ENCODE measurements at regions of chr6 and their contacts with region 1.

Region 1: GRCh38 chr6:21846541-21847451 is 253.2 kb downstream of the SOX4 start:
- DNase-seq: peak; percentile 96
- H3K4me3 ChIP-seq: peak overlapping the region in 1 of 3 experiments; percentile 27
- H3K27ac ChIP-seq: peak overlapping the region; percentile 98
- H3K4me1 ChIP-seq: peaks cover 54% of the 10 kb centered on the region
- H3K27me3 ChIP-seq: no peaks in the 10 kb centered on the region
- CTCF ChIP-seq: no peak
- POLR2A ChIP-seq: peak; percentile 30

Region 2: GRCh38 chr6:21664314-21665109 is 182.3 kb before region 1 on chr6:
- CTCF ChIA-PET with region 1: no interaction called
- POLR2A ChIA-PET with region 1: no interaction called
- dilution Hi-C with region 1: no loop called
- intact Hi-C with region 1: loop called (anchors 1 kb)
- DNase-seq: peak; percentile 61
- H3K4me3 ChIP-seq: peak overlapping the region; percentile 47 to 59 (median 55)
- H3K27ac ChIP-seq: peak overlapping the region; percentile 22
- H3K4me1 ChIP-seq: peaks cover 24% of the 10 kb centered on the region
- H3K27me3 ChIP-seq: no peaks in the 10 kb centered on the region
- CTCF ChIP-seq: no peak
- POLR2A ChIP-seq: no peak

Region 3: GRCh38 chr6:21694168-21694567 is 152.6 kb before region 1 on chr6:
- CTCF ChIA-PET with region 1: no interaction called
- POLR2A ChIA-PET with region 1: no interaction called
- dilution Hi-C with region 1: no loop called
- intact Hi-C with region 1: no loop called
- DNase-seq: no peak
- H3K4me3 ChIP-seq: no peak overlapping the region
- H3K27ac ChIP-seq: no peak overlapping the region
- H3K4me1 ChIP-seq: peaks cover 6% of the 10 kb centered on the region
- H3K27me3 ChIP-seq: no peaks in the 10 kb centered on the region
- CTCF ChIP-seq: no peak
- POLR2A ChIP-seq: no peak

Region 4: GRCh38 chr6:21885532-21886114 is 38.8 kb after region 1 on chr6:
- CTCF ChIA-PET with region 1: interaction called, 6 read pairs
- POLR2A ChIA-PET with region 1: no interaction called
- dilution Hi-C with region 1: no loop called
- intact Hi-C with region 1: loop called (anchors 1 kb)
- DNase-seq: peak; percentile 93
- H3K4me3 ChIP-seq: no peak overlapping the region
- H3K27ac ChIP-seq: peak overlapping the region; percentile 85
- H3K4me1 ChIP-seq: peaks cover 37% of the 10 kb centered on the region
- H3K27me3 ChIP-seq: no peaks in the 10 kb centered on the region
- CTCF ChIP-seq: no peak
- POLR2A ChIP-seq: no peak

Region 5: GRCh38 chr6:22145823-22146677 is 299.3 kb after region 1 on chr6:
- CTCF ChIA-PET with region 1: interaction called, 4 read pairs
- POLR2A ChIA-PET with region 1: no interaction called
- dilution Hi-C with region 1: no loop called
- intact Hi-C with region 1: loop called (anchors 1 kb)
- DNase-seq: peak; percentile 69
- H3K4me3 ChIP-seq: no peak overlapping the region
- H3K27ac ChIP-seq: no peak overlapping the region
- H3K4me1 ChIP-seq: peaks cover 36% of the 10 kb centered on the region
- H3K27me3 ChIP-seq: no peaks in the 10 kb centered on the region
- CTCF ChIP-seq: no peak
- POLR2A ChIP-seq: no peak

Region 6: DNA sequence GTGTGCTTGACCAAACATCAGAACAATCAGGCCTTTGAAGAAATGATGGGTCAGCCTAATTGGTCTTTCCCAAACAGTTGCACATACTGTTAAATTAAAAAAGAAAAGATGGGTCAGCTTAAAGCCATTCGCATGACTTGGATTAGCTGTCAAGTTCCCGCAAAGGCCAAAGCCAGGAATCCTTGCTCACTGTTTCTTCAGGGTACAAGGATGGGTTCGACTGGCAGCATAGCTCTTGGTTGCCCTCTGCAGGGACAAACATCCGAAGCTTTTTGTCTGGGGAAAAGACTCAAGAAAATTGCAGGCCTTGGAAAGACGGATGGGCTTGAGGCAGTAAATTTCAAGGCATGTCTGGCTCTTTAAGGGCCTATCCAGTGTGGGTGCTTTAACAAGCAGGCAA is 890.5 kb after region 1 on chr6:
- CTCF ChIA-PET with region 1: no interaction called
- POLR2A ChIA-PET with region 1: no interaction called
- dilution Hi-C with region 1: no loop called
- intact Hi-C with region 1: loop called (anchors 5 kb)
- DNase-seq: peak; percentile 52
- H3K4me3 ChIP-seq: no peak overlapping the region
- H3K27ac ChIP-seq: no peak overlapping the region
- H3K4me1 ChIP-seq: no peaks in the 10 kb centered on the region
- H3K27me3 ChIP-seq: no peaks in the 10 kb centered on the region
- CTCF ChIP-seq: peak; percentile 26 to 43
- POLR2A ChIP-seq: no peak

Measured in endothelial cell of umbilical vein (primary cell).